PC-9 (cell line): ENCODE measurements at regions of chr6 and their contacts with region 1.

Region 1: GRCh38 chr6:6820641-6821238 is 232.2 kb downstream of the LY86 start:
- DNase-seq: peak; percentile 96 to 97
- H3K4me3 ChIP-seq: no peak overlapping the region
- H3K27ac ChIP-seq: peak overlapping the region; percentile 94
- H3K4me1 ChIP-seq: peaks cover 69% of the 10 kb centered on the region
- H3K27me3 ChIP-seq: no peaks in the 10 kb centered on the region
- CTCF ChIP-seq: no peak

Region 2: DNA sequence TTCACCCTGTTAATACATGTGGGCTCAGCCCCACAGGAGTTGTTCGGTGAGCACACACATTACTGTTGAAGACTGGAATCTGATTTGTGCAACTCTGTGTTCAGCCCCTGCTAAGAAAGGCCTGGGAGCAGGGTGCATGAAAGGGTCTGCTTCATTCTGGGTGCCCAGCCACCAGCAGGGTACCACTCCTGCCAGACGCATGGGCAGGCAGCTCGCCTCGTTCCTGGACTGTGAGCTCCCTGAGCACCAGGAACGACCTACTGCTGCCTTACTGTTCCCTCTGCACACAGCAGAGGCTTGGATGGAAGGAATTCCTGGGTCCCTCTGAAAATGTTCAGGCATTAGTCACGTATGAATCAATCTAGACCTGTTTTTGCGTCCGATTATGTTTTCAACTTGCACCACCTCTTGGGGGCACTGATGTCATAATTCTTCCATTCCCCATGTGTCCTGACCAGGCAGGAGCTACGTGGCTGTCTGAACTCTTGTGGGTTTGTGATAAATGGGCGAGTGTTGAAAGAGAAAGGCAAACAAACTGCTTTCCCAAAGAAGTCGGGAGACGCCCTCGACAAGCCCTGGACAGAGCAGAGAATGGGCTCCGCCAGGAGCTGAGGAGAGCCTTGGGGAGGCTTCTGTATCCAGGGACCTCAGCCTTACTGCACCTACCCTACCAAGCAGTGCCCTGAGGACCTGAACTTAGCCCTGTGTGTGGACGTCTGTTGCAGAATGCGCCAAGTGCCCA is 108.3 kb before region 1 on chr6:
- CTCF ChIA-PET with region 1: no interaction called
- POLR2A ChIA-PET with region 1: no interaction called
- intact Hi-C with region 1: loop called (anchors 5 kb)
- DNase-seq: peak; percentile 79 to 96
- H3K4me3 ChIP-seq: peak overlapping the region; percentile 23; the same call in 1 of the 2 replicates
- H3K27ac ChIP-seq: peak overlapping the region; percentile 83
- H3K4me1 ChIP-seq: peaks cover 21% of the 10 kb centered on the region
- H3K27me3 ChIP-seq: no peaks in the 10 kb centered on the region
- CTCF ChIP-seq: no peak; the same call in 1 of the 2 replicates

Region 3: GRCh38 chr6:6834356-6835222 is 13.8 kb after region 1 on chr6:
- CTCF ChIA-PET with region 1: no interaction called
- POLR2A ChIA-PET with region 1: no interaction called
- intact Hi-C with region 1: no loop called
- DNase-seq: no peak
- H3K4me3 ChIP-seq: no peak overlapping the region
- H3K27ac ChIP-seq: no peak overlapping the region
- H3K4me1 ChIP-seq: peaks cover 4% of the 10 kb centered on the region; the same call in 1 of the 2 replicates
- H3K27me3 ChIP-seq: no peaks in the 10 kb centered on the region
- CTCF ChIP-seq: no peak

Region 4: DNA sequence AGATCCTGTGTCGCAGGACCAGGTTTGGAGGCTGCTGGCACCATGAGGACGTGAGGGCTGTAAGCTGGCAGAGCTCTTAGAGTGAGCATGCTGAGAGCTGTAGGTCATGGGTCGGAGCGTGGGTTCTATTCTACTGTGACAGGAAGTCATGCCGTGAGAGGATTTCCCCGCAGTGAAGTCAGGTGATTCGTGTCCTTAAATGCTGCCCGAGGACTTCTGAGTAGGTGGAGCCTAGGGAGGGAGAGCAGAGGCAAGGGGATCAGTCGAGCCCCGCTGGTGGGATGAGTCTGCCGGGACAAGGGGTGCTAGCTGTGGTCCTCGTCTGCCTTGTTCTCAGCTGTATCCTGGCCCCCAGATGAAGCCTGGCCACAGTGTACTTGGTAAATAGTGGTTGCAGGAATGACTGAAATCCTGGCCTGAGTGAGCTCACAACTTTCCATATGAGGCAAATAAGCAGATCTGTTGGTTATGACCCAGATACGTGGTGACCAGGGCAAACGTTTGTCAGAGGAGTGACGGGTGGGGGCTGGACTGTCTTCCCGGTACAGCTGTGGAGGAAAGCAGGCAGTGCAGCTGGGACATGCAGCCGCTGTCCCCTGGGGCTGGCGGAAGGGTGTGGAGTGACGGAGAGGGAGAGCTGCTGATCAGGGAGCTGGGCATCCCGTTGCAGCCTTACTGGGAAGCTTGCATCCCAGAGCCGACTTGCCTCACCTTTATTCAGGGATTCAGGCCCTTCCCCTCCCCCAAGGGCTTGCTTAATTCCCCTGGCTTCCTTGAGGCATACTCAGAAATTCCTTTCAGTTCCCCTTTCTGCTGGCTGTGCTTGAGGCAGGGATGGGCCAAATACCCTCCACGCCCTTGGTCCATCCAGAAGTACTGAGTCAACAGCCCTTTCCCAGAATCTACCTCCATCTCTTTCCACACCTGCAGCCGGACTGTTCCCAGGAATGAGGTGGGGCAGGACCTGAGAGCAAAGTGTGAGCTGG is 36.1 kb after region 1 on chr6:
- CTCF ChIA-PET with region 1: no interaction called
- POLR2A ChIA-PET with region 1: no interaction called
- intact Hi-C with region 1: loop called (anchors 2 kb)
- DNase-seq: peak; percentile 80 to 92
- H3K4me3 ChIP-seq: peak overlapping the region; percentile 40; the same call in 1 of the 2 replicates
- H3K27ac ChIP-seq: peak overlapping the region; percentile 96
- H3K4me1 ChIP-seq: peaks cover 32% of the 10 kb centered on the region
- H3K27me3 ChIP-seq: no peaks in the 10 kb centered on the region
- CTCF ChIP-seq: no peak

Region 5: DNA sequence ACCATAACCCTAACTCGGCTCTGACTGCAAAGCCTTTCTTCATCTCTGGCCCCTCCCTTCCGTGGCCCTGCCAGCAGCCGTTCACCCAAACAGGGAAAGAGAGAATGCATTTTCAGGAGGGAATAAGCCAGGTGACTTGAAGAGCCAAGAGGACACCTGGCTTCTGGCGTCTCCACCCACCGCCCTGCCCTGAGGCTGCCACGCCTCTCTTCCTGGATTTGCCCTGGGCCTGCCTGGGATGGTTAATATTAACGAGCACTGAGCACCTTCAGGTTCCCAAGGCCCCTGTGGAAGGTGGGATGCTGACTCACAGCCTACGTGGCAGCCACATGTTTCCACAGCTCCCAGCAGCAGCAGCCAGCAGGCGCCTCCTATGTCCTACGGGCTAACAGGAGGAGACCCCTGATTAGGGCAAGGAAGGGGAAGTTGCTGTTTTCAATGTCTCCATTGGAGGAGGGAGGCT is 149.1 kb after region 1 on chr6:
- CTCF ChIA-PET with region 1: no interaction called
- POLR2A ChIA-PET with region 1: no interaction called
- intact Hi-C with region 1: loop called (anchors 2 kb)
- DNase-seq: peak; percentile 91 to 97
- H3K4me3 ChIP-seq: no peak overlapping the region
- H3K27ac ChIP-seq: peak overlapping the region; percentile 73
- H3K4me1 ChIP-seq: peaks cover 44% of the 10 kb centered on the region
- H3K27me3 ChIP-seq: no peaks in the 10 kb centered on the region
- CTCF ChIP-seq: no peak

Region 6: DNA sequence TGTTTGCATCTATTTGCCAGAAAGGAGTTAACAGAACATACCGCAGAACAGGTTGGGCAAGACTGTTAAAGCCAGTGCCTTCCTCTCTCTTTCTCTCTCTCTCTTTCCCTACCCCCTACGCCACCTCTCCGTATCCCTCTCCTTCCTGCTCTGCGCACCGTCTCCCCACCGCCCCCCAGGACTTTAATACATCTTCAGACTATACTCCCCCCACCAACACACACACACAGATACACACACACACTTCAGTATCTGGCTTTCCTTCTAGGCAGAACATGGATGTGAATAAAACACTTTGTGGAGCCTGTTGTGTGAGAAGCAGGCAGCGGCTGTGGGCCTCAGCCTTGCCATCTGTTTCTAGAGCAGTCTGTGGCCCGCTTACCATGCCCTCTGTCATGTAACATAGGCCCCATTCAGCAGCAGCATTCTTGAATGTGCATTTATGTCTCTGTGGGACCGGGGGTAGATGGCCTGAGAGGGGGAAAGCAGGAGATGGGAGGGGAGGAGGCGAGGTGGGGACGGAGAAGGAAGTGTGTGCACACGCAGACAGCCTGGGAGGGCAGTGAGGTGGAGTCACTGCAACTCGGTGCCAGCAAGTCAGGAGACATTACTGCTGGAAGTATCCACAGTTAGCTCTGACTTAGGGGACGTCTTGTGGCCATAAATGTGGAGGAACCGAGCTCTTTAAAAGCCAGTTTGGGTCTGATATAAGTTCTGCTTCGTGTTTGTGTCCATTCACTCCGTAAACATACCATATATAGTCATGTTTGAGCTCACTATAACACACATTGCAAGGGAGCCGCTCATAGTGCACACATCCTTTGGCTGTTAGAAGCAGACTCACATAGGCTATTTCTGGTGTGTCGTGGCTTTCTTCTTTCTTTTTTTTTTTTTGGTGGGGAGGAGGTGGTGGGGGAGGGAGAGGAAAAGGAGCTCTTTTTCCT is 325.4 kb after region 1 on chr6:
- CTCF ChIA-PET with region 1: no interaction called
- POLR2A ChIA-PET with region 1: no interaction called
- intact Hi-C with region 1: loop called (anchors 5 kb)
- DNase-seq: peak; percentile 60 to 72
- H3K4me3 ChIP-seq: peak overlapping the region; percentile 66
- H3K27ac ChIP-seq: peak overlapping the region; percentile 91
- H3K4me1 ChIP-seq: peaks cover 72% of the 10 kb centered on the region
- H3K27me3 ChIP-seq: no peaks in the 10 kb centered on the region
- CTCF ChIP-seq: no peak